CD8-positive, alpha-beta T cell (primary cell): ENCODE measurements at regions of chr6 and their contacts with region 1.

Region 1: GRCh38 chr6:159104163-159104925 is 59.6 kb upstream of the TAGAP start:
- DNase-seq: peak; percentile 65 to 90 (median 78)
- ATAC-seq: peak; percentile 49
- H3K4me3 ChIP-seq: no peak overlapping the region
- H3K4me3 Mint-ChIP-seq: peak overlapping the region; percentile 50
- H3K27ac ChIP-seq: peak overlapping the region in 1 of 2 experiments; percentile 50
- H3K27ac Mint-ChIP-seq: peak overlapping the region; percentile 84
- H3K4me1 ChIP-seq: peaks cover 64% of the 10 kb centered on the region
- H3K4me1 Mint-ChIP-seq: peaks cover 75% of the 10 kb centered on the region
- H3K27me3 ChIP-seq: no peaks in the 10 kb centered on the region
- H3K27me3 Mint-ChIP-seq: no peaks in the 10 kb centered on the region
- CTCF ChIP-seq: peak; percentile 94

Region 2: DNA sequence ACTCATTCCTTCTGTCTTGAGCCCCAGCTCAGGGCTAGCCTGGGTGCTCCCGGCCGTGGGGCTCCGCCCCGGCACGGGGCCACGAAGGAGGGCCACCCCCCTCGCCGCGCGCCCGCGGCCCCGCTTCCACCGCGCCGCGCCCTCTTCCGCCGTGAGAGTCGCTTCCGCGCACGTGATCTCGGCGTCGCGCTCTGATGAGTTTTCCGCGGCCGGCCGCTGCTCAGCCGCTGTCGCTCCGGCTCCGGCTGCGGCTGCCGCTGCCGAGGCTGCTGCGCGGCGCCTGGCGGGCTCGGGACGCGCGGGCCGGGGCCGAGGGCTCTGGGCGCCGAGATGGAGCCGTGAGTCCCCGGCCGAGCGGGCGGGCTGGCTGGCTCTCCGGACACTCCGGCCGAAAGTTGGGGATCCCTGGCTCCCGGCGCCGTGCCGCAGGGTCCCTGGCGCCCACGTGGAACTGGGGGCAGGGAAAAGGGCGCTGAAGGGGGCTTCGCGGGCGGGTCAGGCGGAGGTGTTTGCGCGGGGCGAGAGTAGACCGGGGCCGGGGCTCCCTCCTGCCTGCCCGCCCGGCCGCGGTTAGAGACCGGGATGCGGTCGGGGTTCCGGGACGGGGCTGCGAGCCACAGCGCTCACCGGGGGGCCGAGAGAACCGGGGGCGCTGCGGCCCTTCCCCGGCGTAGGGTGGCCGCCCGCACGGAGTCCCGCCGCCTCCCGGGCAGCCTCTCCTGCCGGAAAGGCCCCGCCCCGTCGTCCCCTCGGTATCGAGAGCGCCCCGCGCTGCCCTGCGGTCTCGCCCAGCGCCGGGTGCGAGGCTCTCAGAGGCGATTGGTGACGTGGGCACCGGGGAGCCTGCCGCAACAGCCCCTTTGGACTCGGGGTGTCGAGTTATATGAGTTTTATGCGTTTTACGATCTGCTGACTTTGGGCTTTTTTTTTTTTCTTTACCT is 544.2 kb before region 1 on chr6 and contains the start of gene TMEM181:
- CTCF ChIA-PET with region 1: no interaction called
- POLR2A ChIA-PET with region 1: no interaction called
- intact Hi-C with region 1: loop called in 1 of 2 experiments (anchors 2 kb)
- DNase-seq: peak; percentile 72 to 95 (median 87)
- ATAC-seq: peak; percentile 89
- H3K4me3 ChIP-seq: peak within 1 kb of the TSS; percentile 61
- H3K4me3 Mint-ChIP-seq: peak within 1 kb of the TSS; percentile 92
- H3K27ac ChIP-seq: peak within 1 kb of the TSS; percentile 74 to 87
- H3K27ac Mint-ChIP-seq: peak within 1 kb of the TSS; percentile 90
- H3K4me1 ChIP-seq: peaks cover 31% of the 10 kb centered on the region
- H3K4me1 Mint-ChIP-seq: peaks cover 45% of the 10 kb centered on the region
- H3K27me3 ChIP-seq: no peaks in the 10 kb centered on the region
- H3K27me3 Mint-ChIP-seq: no peaks in the 10 kb centered on the region
- CTCF ChIP-seq: no peak
- total RNA-seq, gene TMEM181: 9.3 to 10.3 TPM

Region 3: DNA sequence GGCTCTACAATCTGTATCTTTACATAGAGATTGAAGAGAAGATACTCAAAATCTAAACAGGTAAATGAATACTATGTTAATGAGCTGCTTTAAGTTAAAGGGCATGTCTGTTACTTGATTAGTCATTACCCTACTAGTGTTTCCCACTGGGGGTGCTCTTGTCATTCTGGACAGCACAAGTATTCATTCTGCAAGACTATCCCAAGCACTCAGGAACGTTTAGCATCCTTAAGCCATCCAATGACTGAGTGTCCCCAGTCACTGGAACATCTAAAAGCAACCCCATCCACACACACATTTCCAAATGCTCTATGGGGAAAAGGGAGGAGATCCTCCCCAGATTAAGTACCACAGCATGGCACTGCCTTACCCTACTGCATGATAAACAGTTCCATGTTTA is 310.9 kb before region 1 on chr6:
- CTCF ChIA-PET with region 1: no interaction called
- POLR2A ChIA-PET with region 1: interaction called, 4 read pairs
- intact Hi-C with region 1: loop called in 1 of 2 experiments (anchors 10 kb)
- DNase-seq: peak in 2 of 9 experiments; percentile 59 to 70
- ATAC-seq: peak; percentile 22
- H3K4me3 ChIP-seq: no peak overlapping the region
- H3K4me3 Mint-ChIP-seq: peak overlapping the region; percentile 32
- H3K27ac ChIP-seq: peak overlapping the region in 1 of 2 experiments; percentile 32
- H3K27ac Mint-ChIP-seq: peak overlapping the region; percentile 45
- H3K4me1 ChIP-seq: peaks cover 73% of the 10 kb centered on the region
- H3K4me1 Mint-ChIP-seq: peaks cover 81% of the 10 kb centered on the region
- H3K27me3 ChIP-seq: no peaks in the 10 kb centered on the region
- H3K27me3 Mint-ChIP-seq: no peaks in the 10 kb centered on the region
- CTCF ChIP-seq: peak; percentile 36

Region 4: GRCh38 chr6:158999666-159000403 is 104.5 kb before region 1 on chr6 and contains the start of gene RSPH3:
- CTCF ChIA-PET with region 1: interaction called, 486 read pairs
- POLR2A ChIA-PET with region 1: interaction called, 3 read pairs
- intact Hi-C with region 1: no loop called
- DNase-seq: peak; percentile 62 to 93 (median 87)
- ATAC-seq: peak; percentile 85
- H3K4me3 ChIP-seq: peak within 1 kb of the TSS; percentile 91 to 95
- H3K4me3 Mint-ChIP-seq: peak within 1 kb of the TSS; percentile 95
- H3K27ac ChIP-seq: peak within 1 kb of the TSS; percentile 65 to 73
- H3K27ac Mint-ChIP-seq: peak within 1 kb of the TSS; percentile 88
- H3K4me1 ChIP-seq: peaks cover 18% of the 10 kb centered on the region
- H3K4me1 Mint-ChIP-seq: peaks cover 22% of the 10 kb centered on the region
- H3K27me3 ChIP-seq: no peaks in the 10 kb centered on the region
- H3K27me3 Mint-ChIP-seq: no peaks in the 10 kb centered on the region
- CTCF ChIP-seq: no peak
- total RNA-seq, gene RSPH3: 0.52 to 0.83 TPM

Region 5: GRCh38 chr6:159042003-159042825 is 62.1 kb before region 1 on chr6:
- CTCF ChIA-PET with region 1: interaction called, 278 read pairs
- POLR2A ChIA-PET with region 1: interaction called, 41 read pairs
- intact Hi-C with region 1: loop called (anchors 1 kb)
- DNase-seq: peak; percentile 59 to 96 (median 74)
- ATAC-seq: peak; percentile 50
- H3K4me3 ChIP-seq: peak overlapping the region; percentile 63 to 90
- H3K4me3 Mint-ChIP-seq: peak overlapping the region; percentile 99
- H3K27ac ChIP-seq: peak overlapping the region; percentile 82 to 92
- H3K27ac Mint-ChIP-seq: peak overlapping the region; percentile 95
- H3K4me1 ChIP-seq: peaks cover 58% of the 10 kb centered on the region
- H3K4me1 Mint-ChIP-seq: peaks cover 69% of the 10 kb centered on the region
- H3K27me3 ChIP-seq: no peaks in the 10 kb centered on the region
- H3K27me3 Mint-ChIP-seq: no peaks in the 10 kb centered on the region
- CTCF ChIP-seq: peak; percentile 92

Region 6: GRCh38 chr6:159074120-159074684 is 30.1 kb before region 1 on chr6:
- CTCF ChIA-PET with region 1: interaction called, 16 read pairs
- POLR2A ChIA-PET with region 1: interaction called, 4 read pairs
- intact Hi-C with region 1: no loop called
- DNase-seq: no peak
- ATAC-seq: no peak
- H3K4me3 ChIP-seq: no peak overlapping the region
- H3K4me3 Mint-ChIP-seq: no peak overlapping the region
- H3K27ac ChIP-seq: no peak overlapping the region
- H3K27ac Mint-ChIP-seq: no peak overlapping the region
- H3K4me1 ChIP-seq: peaks cover 22% of the 10 kb centered on the region
- H3K4me1 Mint-ChIP-seq: peaks cover 46% of the 10 kb centered on the region
- H3K27me3 ChIP-seq: no peaks in the 10 kb centered on the region
- H3K27me3 Mint-ChIP-seq: no peaks in the 10 kb centered on the region
- CTCF ChIP-seq: no peak

Region 7: GRCh38 chr6:159134701-159135364 is 30.5 kb after region 1 on chr6:
- CTCF ChIA-PET with region 1: interaction called, 133 read pairs
- POLR2A ChIA-PET with region 1: interaction called, 6 read pairs
- intact Hi-C with region 1: loop called (anchors 1 to 2 kb)
- DNase-seq: peak; percentile 63 to 86 (median 78)
- ATAC-seq: peak; percentile 96
- H3K4me3 ChIP-seq: no peak overlapping the region
- H3K4me3 Mint-ChIP-seq: no peak overlapping the region
- H3K27ac ChIP-seq: no peak overlapping the region
- H3K27ac Mint-ChIP-seq: no peak overlapping the region
- H3K4me1 ChIP-seq: no peaks in the 10 kb centered on the region
- H3K4me1 Mint-ChIP-seq: no peaks in the 10 kb centered on the region
- H3K27me3 ChIP-seq: no peaks in the 10 kb centered on the region
- H3K27me3 Mint-ChIP-seq: no peaks in the 10 kb centered on the region
- CTCF ChIP-seq: peak; percentile 96